Mammary epithelial cell (primary cell): ENCODE measurements at regions of chr22 and their contacts with region 1.

Region 1: GRCh38 chr22:27534720-27535125 is 266.8 kb downstream of the MN1 start:
- DNase-seq: no peak
- H3K4me3 ChIP-seq: no peak overlapping the region
- H3K27ac ChIP-seq: no peak overlapping the region
- H3K4me1 ChIP-seq: no peaks in the 10 kb centered on the region
- H3K27me3 ChIP-seq: no peaks in the 10 kb centered on the region
- CTCF ChIP-seq: no peak

Region 2: DNA sequence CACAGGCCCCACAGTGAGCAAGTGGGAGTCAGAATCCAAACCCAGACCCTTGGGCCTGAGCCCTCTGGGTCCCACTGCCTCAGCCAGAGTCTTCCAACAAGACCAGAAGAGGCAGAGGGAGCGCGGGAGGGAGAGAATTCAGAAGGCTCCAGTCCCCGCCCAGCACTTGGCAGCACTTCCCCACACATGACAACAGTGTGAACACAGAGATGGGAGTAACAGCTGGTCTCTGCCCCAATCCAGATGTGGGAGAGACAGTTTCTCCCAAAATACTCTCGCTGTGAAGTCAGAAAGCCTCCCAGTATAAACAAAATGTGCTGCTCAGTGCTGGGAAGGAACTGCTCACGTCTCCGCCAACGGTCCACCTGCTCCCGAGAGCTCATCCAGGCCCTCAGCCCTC is 47.0 kb after region 1 on chr22:
- CTCF ChIA-PET with region 1: no interaction called
- dilution Hi-C with region 1: no loop called
- in situ Hi-C with region 1: no loop called
- intact Hi-C with region 1: no loop called
- DNase-seq: no peak
- H3K4me3 ChIP-seq: no peak overlapping the region
- H3K27ac ChIP-seq: no peak overlapping the region
- H3K4me1 ChIP-seq: peaks cover 3% of the 10 kb centered on the region
- H3K27me3 ChIP-seq: no peaks in the 10 kb centered on the region
- CTCF ChIP-seq: no peak

Region 3: DNA sequence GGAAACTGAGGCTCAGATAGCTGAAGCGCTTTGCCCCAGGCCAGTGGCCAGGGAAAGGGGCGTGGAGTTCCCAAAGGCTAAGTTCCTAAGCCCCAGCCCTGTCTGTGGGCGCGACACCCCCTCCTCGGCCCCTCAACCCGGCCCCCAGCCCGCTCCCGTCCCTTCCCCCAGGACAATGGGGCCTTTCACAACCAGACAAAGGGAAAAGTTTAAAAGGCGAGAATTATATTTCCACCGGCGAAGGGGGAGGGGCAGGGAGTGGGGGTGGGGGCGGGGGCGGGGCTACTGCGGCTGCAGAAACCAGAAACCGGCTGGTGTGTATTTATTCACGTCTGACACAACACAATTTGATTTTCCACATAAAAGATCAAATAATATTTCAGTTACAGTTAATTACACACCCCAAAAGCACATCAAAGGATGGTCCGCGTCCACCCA is 74.7 kb after region 1 on chr22:
- CTCF ChIA-PET with region 1: no interaction called
- dilution Hi-C with region 1: loop called (anchors 5 kb)
- in situ Hi-C with region 1: no loop called
- intact Hi-C with region 1: no loop called
- DNase-seq: no peak
- H3K4me3 ChIP-seq: no peak overlapping the region
- H3K27ac ChIP-seq: no peak overlapping the region
- H3K4me1 ChIP-seq: no peaks in the 10 kb centered on the region
- H3K27me3 ChIP-seq: no peaks in the 10 kb centered on the region
- CTCF ChIP-seq: no peak